SK-N-SH (cell line): ENCODE measurements at regions of chr11 and their contacts with region 1.

Region 1: GRCh38 chr11:111446404-111447111 is 65.6 kb downstream of the BTG4 start:
- DNase-seq: peak; percentile 86
- H3K4me3 ChIP-seq: no peak overlapping the region; a peak in 1 of 4 replicates
- H3K27ac ChIP-seq: no peak overlapping the region
- H3K4me1 ChIP-seq: peaks cover 0 to 5% of the 10 kb centered on the region in 2 experiments; a peak in 1 of 4 replicates
- H3K27me3 ChIP-seq: no peaks in the 10 kb centered on the region
- CTCF ChIP-seq: peak; percentile 87
- EP300 ChIP-seq: no peak
- RAD21 ChIP-seq: peak; percentile 97

Region 2: DNA sequence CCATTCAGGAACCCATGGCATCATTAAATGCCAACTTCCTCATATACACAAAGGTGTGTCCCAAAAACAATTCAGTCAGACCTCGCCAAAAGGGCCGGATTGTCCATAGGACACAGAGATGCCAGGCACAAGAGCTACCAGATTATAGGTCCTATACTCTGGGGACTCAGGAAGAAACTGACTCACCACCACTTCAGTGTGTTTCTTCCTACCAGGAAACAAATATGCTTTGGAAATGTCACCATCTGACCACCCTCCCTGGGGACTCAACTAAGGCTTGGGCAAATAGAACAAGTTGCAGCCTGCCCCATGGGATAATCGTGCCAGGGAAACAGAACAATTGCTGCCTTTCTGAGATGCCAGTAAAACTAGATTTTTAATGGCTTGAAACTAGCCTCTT is 136.5 kb before region 1 on chr11:
- CTCF ChIA-PET with region 1: no interaction called
- POLR2A ChIA-PET with region 1: no interaction called
- DNase-seq: no peak
- H3K4me3 ChIP-seq: no peak overlapping the region
- H3K27ac ChIP-seq: no peak overlapping the region
- H3K4me1 ChIP-seq: peaks cover 0 to 4% of the 10 kb centered on the region in 2 experiments; a peak in 1 of 4 replicates
- H3K27me3 ChIP-seq: peaks cover 16% of the 10 kb centered on the region; the same call in 1 of the 2 replicates
- CTCF ChIP-seq: no peak
- EP300 ChIP-seq: no peak
- RAD21 ChIP-seq: no peak

Region 3: DNA sequence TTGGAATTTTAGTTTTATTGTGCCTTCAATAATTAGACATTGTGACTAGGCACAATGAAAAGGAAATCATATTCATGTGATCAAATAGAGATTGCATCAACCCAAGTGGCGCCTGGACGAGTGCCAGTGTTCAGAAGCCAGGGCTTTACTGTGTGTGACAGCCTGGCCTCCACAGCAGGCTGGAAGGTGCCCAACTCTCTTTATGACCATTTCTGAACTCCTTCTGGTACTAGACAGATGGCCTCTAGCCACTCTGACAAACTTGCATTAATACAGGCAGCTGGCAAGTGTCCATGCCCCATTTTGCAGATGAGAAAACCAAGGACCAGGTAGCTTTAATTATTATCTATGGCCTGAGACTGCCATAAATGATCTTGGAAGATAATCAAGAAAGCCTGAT is 59.2 kb before region 1 on chr11:
- CTCF ChIA-PET with region 1: no interaction called
- POLR2A ChIA-PET with region 1: no interaction called
- DNase-seq: peak; percentile 64
- H3K4me3 ChIP-seq: no peak overlapping the region
- H3K27ac ChIP-seq: peak overlapping the region in 1 of 2 experiments; percentile 50; a peak in 1 of 4 replicates
- H3K4me1 ChIP-seq: no peaks in the 10 kb centered on the region; a peak in 1 of 4 replicates
- H3K27me3 ChIP-seq: no peaks in the 10 kb centered on the region
- CTCF ChIP-seq: no peak
- EP300 ChIP-seq: peak in 1 of 2 experiments; percentile 72; a peak in 2 of 4 replicates
- RAD21 ChIP-seq: no peak

Region 4: DNA sequence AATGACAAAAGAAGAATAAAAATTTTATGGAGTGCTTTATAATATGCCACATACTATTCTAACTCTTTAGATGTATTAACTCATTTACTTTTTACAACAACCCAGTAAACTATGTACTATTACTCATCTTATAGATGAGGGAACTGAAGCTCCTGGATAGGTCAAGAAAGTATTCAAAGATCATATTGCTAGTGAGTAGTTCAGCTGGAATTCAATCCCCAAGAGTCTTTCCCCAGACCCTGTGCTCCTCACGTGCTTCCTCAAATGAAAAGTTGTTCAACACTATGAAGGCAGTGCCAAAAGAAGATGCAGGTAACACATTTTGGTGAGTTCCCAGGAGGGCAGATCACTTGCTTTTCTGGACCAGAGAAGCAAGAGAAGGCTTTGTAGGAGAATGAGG is 18.8 kb after region 1 on chr11:
- CTCF ChIA-PET with region 1: interaction called, 17 read pairs
- POLR2A ChIA-PET with region 1: no interaction called
- DNase-seq: no peak
- H3K4me3 ChIP-seq: no peak overlapping the region
- H3K27ac ChIP-seq: no peak overlapping the region
- H3K4me1 ChIP-seq: peaks cover 2 to 4% of the 10 kb centered on the region in 2 experiments; a peak in 2 of 4 replicates
- H3K27me3 ChIP-seq: no peaks in the 10 kb centered on the region
- CTCF ChIP-seq: no peak
- EP300 ChIP-seq: no peak; a peak in 1 of 4 replicates
- RAD21 ChIP-seq: no peak